GM12878 (cell line): ENCODE measurements at regions of chr12 and their contacts with region 1.

Region 1: GRCh38 chr12:14239350-14239934 is 126.0 kb upstream of the ATF7IP start:
- DNase-seq: peak; percentile 86
- ATAC-seq: peak; percentile 90
- H3K4me3 ChIP-seq: peak overlapping the region; percentile 42; the same call in 1 of the 2 replicates
- H3K27ac ChIP-seq: peak overlapping the region; percentile 99
- H3K4me1 ChIP-seq: peaks cover 23% of the 10 kb centered on the region
- H3K27me3 ChIP-seq: no peaks in the 10 kb centered on the region
- CTCF ChIP-seq: peak; percentile 30 to 47 (median 30); a peak in 4 of 6 replicates
- EP300 ChIP-seq: peak; percentile 40 to 53; a peak in 2 of 4 replicates
- POLR2A ChIP-seq: no peak
- RAD21 ChIP-seq: peak; percentile 34; the same call in 1 of the 2 replicates

Region 2: GRCh38 chr12:14272956-14273907 is 33.8 kb after region 1 on chr12:
- CTCF ChIA-PET with region 1: interaction called, 5 read pairs
- POLR2A ChIA-PET with region 1: no interaction called
- RAD21 ChIA-PET with region 1: interaction called, 7 read pairs
- SMC1A ChIA-PET with region 1: interaction called, 11 read pairs
- in situ Hi-C with region 1: no loop called
- intact Hi-C with region 1: no loop called
- DNase-seq: no peak
- ATAC-seq: no peak
- H3K4me3 ChIP-seq: no peak overlapping the region
- H3K27ac ChIP-seq: peak overlapping the region; percentile 23; the same call in 1 of the 2 replicates
- H3K4me1 ChIP-seq: peaks cover 4% of the 10 kb centered on the region
- H3K27me3 ChIP-seq: no peaks in the 10 kb centered on the region
- CTCF ChIP-seq: no peak
- EP300 ChIP-seq: no peak
- POLR2A ChIP-seq: no peak
- RAD21 ChIP-seq: no peak

Region 3: GRCh38 chr12:14373217-14373616 is 133.8 kb after region 1 on chr12:
- CTCF ChIA-PET with region 1: interaction called, 6 read pairs
- POLR2A ChIA-PET with region 1: interaction called, 3 read pairs
- RAD21 ChIA-PET with region 1: interaction called, 21 read pairs
- SMC1A ChIA-PET with region 1: interaction called, 8 read pairs
- in situ Hi-C with region 1: loop called (anchors 5 kb)
- intact Hi-C with region 1: no loop called
- DNase-seq: no peak
- ATAC-seq: peak; percentile 31
- H3K4me3 ChIP-seq: no peak overlapping the region
- H3K27ac ChIP-seq: peak overlapping the region; percentile 3; the same call in 1 of the 2 replicates
- H3K4me1 ChIP-seq: no peaks in the 10 kb centered on the region; the same call in 1 of the 2 replicates
- H3K27me3 ChIP-seq: no peaks in the 10 kb centered on the region
- CTCF ChIP-seq: no peak
- EP300 ChIP-seq: no peak
- POLR2A ChIP-seq: no peak
- RAD21 ChIP-seq: no peak

Region 4: GRCh38 chr12:14454098-14454907 is 214.9 kb after region 1 on chr12:
- CTCF ChIA-PET with region 1: interaction called, 103 read pairs
- POLR2A ChIA-PET with region 1: interaction called, 3 read pairs
- RAD21 ChIA-PET with region 1: interaction called, 113 read pairs
- SMC1A ChIA-PET with region 1: interaction called, 103 read pairs
- in situ Hi-C with region 1: loop called (anchors 25 kb)
- intact Hi-C with region 1: loop called (anchors 1 kb)
- DNase-seq: peak; percentile 30
- ATAC-seq: peak; percentile 97
- H3K4me3 ChIP-seq: no peak overlapping the region
- H3K27ac ChIP-seq: no peak overlapping the region
- H3K4me1 ChIP-seq: no peaks in the 10 kb centered on the region
- H3K27me3 ChIP-seq: no peaks in the 10 kb centered on the region
- CTCF ChIP-seq: peak; percentile 69 to 96 (median 83); a peak in 5 of 6 replicates
- EP300 ChIP-seq: no peak
- POLR2A ChIP-seq: no peak
- RAD21 ChIP-seq: peak; percentile 86

Region 5: DNA sequence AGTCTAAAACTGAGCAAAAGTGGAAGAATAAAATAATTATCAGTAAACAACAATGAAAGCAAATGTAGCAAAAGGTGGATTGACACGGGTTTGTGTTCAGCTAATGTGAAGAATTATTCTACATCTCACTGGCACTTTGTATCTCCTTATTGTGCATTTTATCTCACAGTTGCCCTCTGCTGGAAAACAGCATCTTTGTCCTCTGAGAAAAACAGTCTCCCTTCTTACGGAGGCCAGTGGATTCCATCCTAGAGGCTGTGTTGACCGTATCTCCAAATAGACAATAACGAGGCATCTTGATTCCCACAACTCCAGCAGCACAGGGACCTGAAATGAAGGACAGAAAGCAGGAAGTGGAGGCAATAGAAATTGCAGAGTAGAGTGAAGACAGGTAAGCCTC is 379.5 kb after region 1 on chr12:
- CTCF ChIA-PET with region 1: interaction called, 5 read pairs
- POLR2A ChIA-PET with region 1: no interaction called
- RAD21 ChIA-PET with region 1: interaction called, 5 read pairs
- SMC1A ChIA-PET with region 1: interaction called, 16 read pairs
- in situ Hi-C with region 1: loop called (anchors 5 kb)
- intact Hi-C with region 1: loop called (anchors 2 kb)
- DNase-seq: no peak
- ATAC-seq: no peak
- H3K4me3 ChIP-seq: no peak overlapping the region
- H3K27ac ChIP-seq: no peak overlapping the region
- H3K4me1 ChIP-seq: peaks cover 23% of the 10 kb centered on the region
- H3K27me3 ChIP-seq: no peaks in the 10 kb centered on the region
- CTCF ChIP-seq: 0 out of 6 replicates have a peak, but pooled peaks of 1 of the 3 experiments have one; percentile 16
- EP300 ChIP-seq: no peak
- POLR2A ChIP-seq: no peak
- RAD21 ChIP-seq: peak; percentile 48

Region 6: GRCh38 chr12:14716848-14717444 is 477.5 kb after region 1 on chr12:
- CTCF ChIA-PET with region 1: interaction called, 48 read pairs
- POLR2A ChIA-PET with region 1: interaction called, 4 read pairs
- RAD21 ChIA-PET with region 1: interaction called, 22 read pairs
- SMC1A ChIA-PET with region 1: interaction called, 28 read pairs
- in situ Hi-C with region 1: loop called (anchors 5 kb)
- intact Hi-C with region 1: loop called (anchors 1 kb)
- DNase-seq: no peak
- ATAC-seq: peak; percentile 94
- H3K4me3 ChIP-seq: no peak overlapping the region
- H3K27ac ChIP-seq: no peak overlapping the region
- H3K4me1 ChIP-seq: no peaks in the 10 kb centered on the region
- H3K27me3 ChIP-seq: no peaks in the 10 kb centered on the region
- CTCF ChIP-seq: peak; percentile 56 to 70 (median 63)
- EP300 ChIP-seq: no peak
- POLR2A ChIP-seq: no peak
- RAD21 ChIP-seq: peak; percentile 67